Esophagus muscularis mucosa (tissue), 4 donors: ENCODE measurements at regions of chr3 and their contacts with region 1.

Region 1: DNA sequence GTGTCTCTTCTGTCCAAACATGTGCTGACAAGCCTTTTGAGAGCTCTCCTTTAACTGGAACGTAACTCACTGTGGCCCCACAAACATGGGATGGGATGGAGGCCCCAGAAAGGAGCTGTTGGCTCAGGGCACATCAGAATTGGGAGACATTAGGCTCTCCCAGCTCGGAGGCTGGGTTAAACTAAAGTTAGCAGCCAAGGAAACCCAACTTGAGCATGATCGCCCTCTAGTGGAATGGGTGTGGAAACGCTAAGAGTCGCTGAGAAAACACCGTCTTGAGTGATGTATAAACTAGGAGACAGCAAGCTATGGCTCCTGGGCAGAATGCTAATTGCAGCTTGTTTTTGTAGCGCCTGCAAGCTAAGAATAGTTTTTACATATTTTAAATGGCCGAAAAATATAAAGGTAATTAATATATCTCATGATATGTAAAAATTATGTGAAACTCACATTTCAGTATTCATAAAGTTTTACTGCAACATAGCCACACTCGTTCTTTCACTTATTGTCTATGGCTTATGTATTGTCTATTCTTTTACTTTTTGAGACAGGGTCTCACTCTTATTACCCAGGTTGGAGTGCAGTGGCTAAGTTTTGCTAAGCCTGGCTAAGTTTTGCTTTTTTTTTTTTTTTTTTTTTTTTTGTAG is 138.8 kb upstream of the HACD2 start:
- DNase-seq: no peak
- H3K4me3 ChIP-seq: no peak overlapping the region
- H3K27ac ChIP-seq: peak overlapping the region; percentile 67 to 91 (median 78)
- H3K4me1 ChIP-seq: peaks cover 18 to 54% (median 51%) of the 10 kb centered on the region in 4 donors
- H3K27me3 ChIP-seq: no peaks in the 10 kb centered on the region
- CTCF ChIP-seq: peak; percentile 78 to 93 (median 86)
- EP300 ChIP-seq: no peak
- POLR2A ChIP-seq: no peak

Region 2: DNA sequence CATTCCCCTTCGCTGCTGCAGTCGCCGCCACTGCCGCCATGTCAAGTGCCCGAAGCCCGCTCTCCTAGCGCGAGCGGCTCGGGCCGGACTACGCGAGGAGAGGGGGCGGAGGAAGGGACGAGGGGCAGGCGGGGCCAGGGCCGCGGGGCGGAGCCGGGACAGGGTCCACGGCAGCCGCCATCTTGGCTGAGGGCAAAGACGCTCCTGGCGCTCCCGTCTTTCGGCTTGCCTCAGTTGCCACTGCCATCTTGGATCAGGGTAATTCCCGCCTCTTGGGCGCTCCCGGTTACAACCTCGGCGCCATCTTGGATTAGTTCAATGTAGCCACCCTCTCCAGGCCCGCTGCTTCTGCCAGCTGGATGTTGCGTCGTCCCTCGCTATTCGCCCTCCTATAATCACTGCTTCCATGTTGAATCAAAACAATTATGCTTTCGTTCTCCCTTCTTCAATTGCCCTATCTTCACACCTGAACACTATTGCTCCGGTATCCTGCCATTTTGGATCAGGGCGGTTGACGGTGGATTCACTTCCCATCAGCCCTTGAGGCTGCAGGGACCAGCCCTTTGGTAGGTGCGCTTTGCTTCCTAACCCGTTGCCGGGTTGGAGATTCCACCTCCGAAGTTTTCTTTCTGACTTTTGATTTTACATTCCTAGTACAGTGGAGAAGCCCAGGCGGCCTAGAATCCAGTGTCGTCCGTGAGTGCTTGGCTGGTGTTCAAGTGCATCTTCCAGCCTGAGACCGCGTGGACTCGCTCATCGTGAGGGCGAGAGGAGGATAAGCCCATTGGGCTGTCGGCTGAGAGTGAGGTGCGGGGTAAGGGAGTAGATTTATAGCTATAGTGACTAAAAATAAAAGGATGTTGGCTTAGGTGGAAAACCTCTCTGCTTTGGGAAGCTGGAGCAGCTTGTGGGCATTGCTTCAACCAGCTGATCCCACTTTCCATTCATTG is 138.4 kb before region 1 on chr3 and contains the start of gene HACD2:
- intact Hi-C with region 1: loop called (anchors 10 kb)
- DNase-seq: peak; percentile 98
- H3K4me3 ChIP-seq: peak within 1 kb of the TSS; percentile 87 to 95 (median 94)
- H3K27ac ChIP-seq: peak within 1 kb of the TSS; percentile 90 to 96 (median 95)
- H3K4me1 ChIP-seq: peaks cover 12 to 46% (median 26%) of the 10 kb centered on the region in 4 donors
- H3K27me3 ChIP-seq: no peaks in the 10 kb centered on the region
- CTCF ChIP-seq: no peak
- EP300 ChIP-seq: no peak
- POLR2A ChIP-seq: peak; percentile 49
- total RNA-seq, gene HACD2: 20.5 to 30.3 (median 25.3) TPM

Region 3: DNA sequence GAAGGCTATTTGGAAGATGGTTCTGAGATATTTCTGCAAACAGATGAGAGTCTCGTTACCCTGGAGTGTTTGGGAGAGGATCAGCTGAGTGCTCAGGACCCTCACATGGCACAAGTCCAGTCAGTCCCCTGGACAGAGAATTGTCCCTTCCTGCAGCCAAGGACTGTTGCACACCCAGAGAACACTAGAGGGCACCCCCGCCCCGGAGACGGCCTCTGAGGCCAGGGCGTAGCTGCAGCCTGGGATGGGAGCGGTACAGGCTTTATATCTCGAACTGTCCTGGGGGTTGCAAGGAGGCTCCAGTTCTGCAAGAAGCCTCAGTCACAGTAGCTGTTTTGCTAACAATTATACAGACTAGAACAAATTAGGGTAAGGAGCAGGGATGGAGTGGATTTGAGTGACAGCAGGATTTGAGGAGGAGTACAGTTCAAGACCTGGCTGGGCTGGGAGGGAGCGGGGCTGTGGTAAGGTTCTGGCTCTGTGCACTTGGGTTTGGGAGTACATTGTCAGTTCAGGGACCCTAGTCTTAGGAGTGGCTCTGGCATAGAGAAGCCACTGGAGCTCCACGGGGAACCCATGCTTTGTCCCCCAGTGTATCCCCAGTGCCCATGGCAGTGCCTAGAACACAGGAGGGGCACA is 71.2 kb before region 1 on chr3:
- intact Hi-C with region 1: loop called (anchors 5 kb)
- DNase-seq: peak; percentile 95
- H3K4me3 ChIP-seq: no peak overlapping the region
- H3K27ac ChIP-seq: peak overlapping the region; percentile 94 to 97 (median 96)
- H3K4me1 ChIP-seq: peaks cover 45 to 96% (median 95%) of the 10 kb centered on the region in 4 donors
- H3K27me3 ChIP-seq: no peaks in the 10 kb centered on the region
- CTCF ChIP-seq: peak; percentile 75 to 91 (median 80)
- EP300 ChIP-seq: no peak
- POLR2A ChIP-seq: no peak

Region 4: GRCh38 chr3:123980539-123980938 is 256.9 kb after region 1 on chr3:
- intact Hi-C with region 1: no loop called
- DNase-seq: no peak
- H3K4me3 ChIP-seq: peak overlapping the region; percentile 41 to 52 (median 47)
- H3K27ac ChIP-seq: no peak overlapping the region
- H3K4me1 ChIP-seq: peaks cover 6 to 7% (median 6%) of the 10 kb centered on the region in 4 donors
- H3K27me3 ChIP-seq: no peaks in the 10 kb centered on the region
- CTCF ChIP-seq: no peak
- EP300 ChIP-seq: no peak
- POLR2A ChIP-seq: no peak